ENCODE measurements at regions of chr3 and their contacts with region 1.

Region 1: DNA sequence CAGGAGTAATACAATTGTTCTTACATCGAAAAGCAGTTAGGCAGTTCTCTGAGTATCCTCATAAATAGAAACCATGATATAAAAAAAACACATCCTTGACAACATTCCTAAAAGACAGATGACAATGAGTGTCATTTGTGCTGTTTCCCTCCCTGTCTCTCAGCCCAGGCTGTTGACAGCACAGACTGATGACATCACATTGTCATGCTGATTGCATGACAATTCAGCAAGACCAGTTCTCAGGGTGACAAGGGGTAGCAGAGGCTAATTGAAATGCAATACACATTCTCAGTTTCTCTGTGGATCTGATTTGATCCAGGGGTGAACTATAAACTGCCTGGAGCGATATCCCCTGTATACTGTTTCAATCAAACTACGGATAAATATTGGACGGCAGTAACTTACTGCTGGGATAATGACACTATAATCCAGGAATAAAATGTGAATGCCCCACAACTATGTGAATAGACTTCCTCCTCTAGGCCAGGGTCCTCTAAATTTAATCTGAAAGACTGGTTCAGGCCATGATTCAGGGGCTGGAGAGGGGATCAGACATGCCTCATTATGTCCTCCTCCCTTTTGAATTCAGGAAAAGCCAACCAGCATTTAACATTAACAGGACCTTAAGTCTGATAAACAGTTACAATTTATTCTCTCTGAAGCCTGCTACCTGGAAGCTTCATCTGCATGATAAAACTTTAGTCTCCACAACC is 16.7 kb upstream of the EIF1B start:
- DNase-seq: no peak
- H3K4me3 ChIP-seq: no peak overlapping the region
- CTCF ChIP-seq: no peak

Region 2: GRCh38 chr3:39473452-39474127 is 819.2 kb before region 1 on chr3:
- CTCF ChIA-PET with region 1: no interaction called
- POLR2A ChIA-PET with region 1: no interaction called
- DNase-seq: no peak
- H3K4me3 ChIP-seq: no peak overlapping the region
- CTCF ChIP-seq: no peak

Region 3: GRCh38 chr3:40278791-40279190 is 14.0 kb before region 1 on chr3:
- CTCF ChIA-PET with region 1: no interaction called
- POLR2A ChIA-PET with region 1: no interaction called
- DNase-seq: no peak
- H3K4me3 ChIP-seq: no peak overlapping the region
- CTCF ChIP-seq: no peak

Region 4: GRCh38 chr3:40309418-40309924 is 16.7 kb after region 1 on chr3 and contains the start of gene EIF1B:
- CTCF ChIA-PET with region 1: interaction called, 39 read pairs
- POLR2A ChIA-PET with region 1: no interaction called
- DNase-seq: peak; percentile 79
- H3K4me3 ChIP-seq: peak within 1 kb of the TSS; percentile 82
- CTCF ChIP-seq: peak; percentile 84